ENCODE measurements at regions of chr1 and their contacts with region 1.

Region 1: GRCh38 chr1:234722904-234723720 is 113.1 kb upstream of the IRF2BP2 start:
- DNase-seq: peak; percentile 68 to 91
- H3K4me3 ChIP-seq: peak overlapping the region in 1 of 4 donors; percentile 4
- H3K27ac ChIP-seq: peak overlapping the region; percentile 97 to 99 (median 98)
- H3K4me1 ChIP-seq: peaks cover 85 to 99% (median 89%) of the 10 kb centered on the region in 4 donors
- H3K27me3 ChIP-seq: no peaks in the 10 kb centered on the region
- CTCF ChIP-seq: no peak
- EP300 ChIP-seq: no peak
- POLR2A ChIP-seq: no peak

Region 2: DNA sequence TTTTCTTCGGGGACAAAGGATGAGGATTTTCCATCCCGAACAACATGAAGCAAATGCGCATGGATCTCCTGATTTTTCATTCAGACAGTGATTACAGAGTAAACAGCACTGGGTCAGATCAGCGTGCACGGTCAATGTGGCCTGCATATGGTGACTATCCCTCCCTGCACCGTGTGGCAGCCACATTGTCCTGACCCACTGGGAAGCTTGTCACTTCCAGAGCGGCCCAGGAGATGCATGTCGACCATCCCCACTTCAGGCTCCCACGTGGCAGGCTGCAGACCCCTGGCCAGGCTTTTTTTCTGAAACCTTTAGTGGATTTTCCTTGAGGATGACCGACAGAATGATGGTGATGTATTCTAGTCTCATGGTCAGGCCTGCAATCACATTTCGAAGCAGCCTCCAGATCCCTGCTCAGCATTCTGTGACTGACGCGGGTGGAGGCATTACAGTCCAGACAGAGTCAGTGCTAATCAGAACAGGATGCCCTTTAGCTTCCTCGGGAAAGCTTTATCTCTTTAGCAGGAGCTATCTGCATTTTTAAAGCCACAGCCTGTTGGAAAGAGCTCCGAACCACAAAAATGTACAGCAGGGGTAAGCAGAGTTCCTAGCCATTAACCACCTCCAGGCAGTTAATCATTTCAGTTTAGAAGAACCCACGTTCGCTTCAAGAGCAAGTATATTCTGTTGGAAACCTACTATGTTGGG is 169.8 kb before region 1 on chr1:
- intact Hi-C with region 1: no loop called
- DNase-seq: peak in 1 of 2 donors; percentile 59
- H3K4me3 ChIP-seq: no peak overlapping the region
- H3K27ac ChIP-seq: peak overlapping the region in 3 of 5 donors; percentile 61 to 80 (median 63)
- H3K4me1 ChIP-seq: peaks cover 0 to 18% (median 6%) of the 10 kb centered on the region in 4 donors
- H3K27me3 ChIP-seq: no peaks in the 10 kb centered on the region
- CTCF ChIP-seq: no peak
- EP300 ChIP-seq: no peak
- POLR2A ChIP-seq: no peak

Region 3: GRCh38 chr1:234610348-234611152 is 112.6 kb before region 1 on chr1:
- intact Hi-C with region 1: loop called (anchors 10 kb)
- DNase-seq: peak; percentile 97 to 98
- H3K4me3 ChIP-seq: peak overlapping the region; percentile 41 to 59 (median 48)
- H3K27ac ChIP-seq: peak overlapping the region; percentile 96 to 100 (median 99)
- H3K4me1 ChIP-seq: peaks cover 28 to 49% (median 42%) of the 10 kb centered on the region in 4 donors
- H3K27me3 ChIP-seq: no peaks in the 10 kb centered on the region
- CTCF ChIP-seq: peak in 2 of 7 experiments; percentile 11 to 13
- EP300 ChIP-seq: peak; percentile 52
- POLR2A ChIP-seq: peak in 2 of 4 donors; percentile 88 to 89

Measured in stomach (tissue), 19 donors.